Activated naive CD4-positive, alpha-beta T cell treated with anti-CD3 and anti-CD28 coated beads for 36 hours (primary cell): ENCODE measurements at regions of chr20 and their contacts with region 1.

Region 1: GRCh38 chr20:37095599-37096414 is at the start of gene RBL1:
- DNase-seq: peak; percentile 91
- H3K4me3 Mint-ChIP-seq: peak within 1 kb of the TSS; percentile 92
- H3K27ac Mint-ChIP-seq: peak within 1 kb of the TSS; percentile 100
- H3K4me1 Mint-ChIP-seq: peaks cover 37% of the 10 kb centered on the region
- H3K27me3 Mint-ChIP-seq: no peaks in the 10 kb centered on the region
- total RNA-seq, gene RBL1: 32.9 to 36.2 TPM

Region 2: DNA sequence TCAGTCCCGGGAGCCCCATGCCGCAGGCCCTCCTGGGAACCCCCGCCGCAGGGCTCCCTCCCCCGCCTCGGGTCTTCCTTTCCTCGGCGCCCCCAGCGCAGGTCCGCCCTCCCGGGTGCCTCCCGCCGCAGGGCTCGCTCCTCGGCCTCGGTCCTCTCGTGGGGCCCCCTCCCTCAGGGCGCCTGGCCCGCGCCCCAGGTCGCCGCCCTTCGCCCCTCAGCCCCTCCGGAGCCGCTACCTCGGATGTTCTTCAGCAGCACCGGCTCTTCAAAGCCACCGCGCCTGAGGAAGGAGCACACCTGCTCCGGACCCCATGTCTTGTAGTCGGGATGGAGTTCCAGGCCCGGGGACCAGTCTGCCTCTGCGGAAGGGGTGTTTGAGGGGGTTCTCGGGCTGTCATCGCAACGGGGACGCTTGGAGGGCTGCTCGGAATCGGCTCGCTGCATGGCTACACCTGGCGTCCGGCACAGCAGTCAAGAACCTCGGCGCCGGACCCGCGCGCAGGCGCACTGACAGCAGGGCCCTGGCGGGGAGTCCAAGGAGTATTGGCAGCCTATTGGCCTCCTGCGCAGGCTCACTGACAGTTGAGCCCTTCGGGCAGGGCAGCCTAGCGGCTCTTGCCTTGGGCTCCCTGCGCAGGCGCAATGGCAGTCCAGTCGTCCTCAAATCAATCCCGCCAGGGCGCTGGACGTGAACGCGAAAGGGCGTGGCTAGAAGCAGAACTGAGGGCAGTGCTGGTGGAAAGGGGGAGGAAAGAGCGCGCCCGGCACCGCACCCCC is 144.4 kb before region 1 on chr20 and contains the start of gene SAMHD1:
- CTCF ChIA-PET with region 1: no interaction called
- intact Hi-C with region 1: loop called (anchors 5 kb)
- DNase-seq: peak; percentile 89
- H3K4me3 Mint-ChIP-seq: peak within 1 kb of the TSS; percentile 96
- H3K27ac Mint-ChIP-seq: peak within 1 kb of the TSS; percentile 92
- H3K4me1 Mint-ChIP-seq: peaks cover 39% of the 10 kb centered on the region
- H3K27me3 Mint-ChIP-seq: no peaks in the 10 kb centered on the region
- total RNA-seq, gene SAMHD1: 29.9 to 33.5 TPM

Region 3: DNA sequence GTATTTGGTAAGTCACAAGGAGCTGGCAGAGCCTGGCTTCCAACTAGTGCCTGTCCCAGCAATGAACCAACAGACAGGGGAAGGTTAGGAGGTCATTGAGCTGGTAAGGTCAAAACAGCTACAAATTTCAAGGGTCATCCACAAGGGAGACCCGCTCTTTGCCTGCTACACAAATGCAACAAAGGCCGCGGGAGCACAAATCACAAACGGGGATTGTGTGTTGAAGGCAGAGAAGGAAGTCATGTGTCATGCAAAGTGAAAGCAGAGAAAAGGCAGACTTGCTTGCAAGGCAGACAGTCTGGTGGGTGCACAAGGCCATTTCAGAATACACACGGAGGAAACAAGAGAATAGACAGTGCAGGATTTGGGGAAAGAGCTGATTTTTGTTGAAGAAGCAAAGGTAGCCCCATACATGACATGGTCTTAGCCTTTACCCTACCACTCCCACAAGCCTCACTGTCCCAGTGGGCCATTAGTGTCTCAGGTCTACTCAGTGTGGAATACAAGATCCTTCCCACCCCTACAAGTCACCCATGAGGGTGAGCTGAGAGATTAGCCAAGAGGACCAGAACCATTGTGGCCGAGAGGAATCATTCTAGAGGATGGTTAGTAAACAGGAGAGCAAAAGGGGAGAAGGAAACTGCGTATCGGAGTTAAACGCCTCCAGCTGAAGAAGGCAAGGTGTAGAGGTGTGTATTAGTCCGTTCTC is 126.2 kb before region 1 on chr20:
- CTCF ChIA-PET with region 1: no interaction called
- intact Hi-C with region 1: loop called (anchors 5 kb)
- DNase-seq: peak; percentile 67
- H3K4me3 Mint-ChIP-seq: peak overlapping the region; percentile 53
- H3K27ac Mint-ChIP-seq: peak overlapping the region; percentile 86
- H3K4me1 Mint-ChIP-seq: peaks cover 60% of the 10 kb centered on the region
- H3K27me3 Mint-ChIP-seq: no peaks in the 10 kb centered on the region

Region 4: DNA sequence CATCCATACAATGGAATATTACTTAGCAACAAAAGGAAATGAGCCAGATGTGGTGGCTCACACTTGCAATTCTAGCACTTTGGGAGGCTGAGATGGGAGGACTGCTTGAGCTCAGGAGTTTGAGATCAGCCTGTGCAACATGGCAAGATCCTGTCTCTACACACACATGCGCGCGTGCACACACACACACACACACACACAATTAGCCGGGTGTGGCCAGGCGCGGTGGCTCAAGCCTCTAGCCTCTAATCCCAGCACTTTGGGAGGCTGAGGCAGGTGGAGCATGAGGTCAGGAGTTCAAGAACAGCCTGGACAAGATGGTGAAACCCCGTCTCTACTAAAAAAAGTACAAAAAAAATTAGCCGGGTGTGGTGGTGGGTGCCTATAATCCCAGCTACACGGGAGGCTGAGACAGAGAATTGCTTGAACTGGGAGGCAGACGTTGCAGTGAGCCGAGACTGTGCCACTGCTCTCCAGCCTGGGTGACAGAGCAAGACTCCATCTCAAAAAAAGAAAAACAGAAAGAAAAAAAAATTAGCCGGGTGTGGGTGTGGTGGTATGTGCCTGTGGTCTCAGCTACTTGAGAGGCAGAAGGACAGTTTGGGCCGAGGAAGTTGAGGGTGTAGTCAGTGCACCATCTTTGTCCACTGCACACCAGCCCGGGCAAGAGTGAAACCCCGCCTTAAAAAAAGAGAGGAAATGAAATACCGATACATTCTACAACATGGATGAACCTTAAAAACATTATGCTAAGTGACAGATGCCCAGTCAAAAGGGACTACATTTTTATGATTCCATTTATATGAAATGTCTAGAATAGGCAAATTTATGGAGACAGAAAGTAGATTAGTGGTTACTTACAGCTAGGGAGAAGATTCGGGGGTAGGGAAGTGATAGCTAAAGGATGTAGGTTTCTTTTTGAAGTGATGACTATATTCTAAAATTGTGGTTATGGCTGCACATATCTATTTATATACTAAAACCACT is 52.5 kb before region 1 on chr20:
- CTCF ChIA-PET with region 1: no interaction called
- intact Hi-C with region 1: loop called (anchors 10 kb)
- DNase-seq: peak; percentile 21
- H3K4me3 Mint-ChIP-seq: peak overlapping the region; percentile 19
- H3K27ac Mint-ChIP-seq: peak overlapping the region; percentile 60
- H3K4me1 Mint-ChIP-seq: peaks cover 25% of the 10 kb centered on the region
- H3K27me3 Mint-ChIP-seq: no peaks in the 10 kb centered on the region

Region 5: DNA sequence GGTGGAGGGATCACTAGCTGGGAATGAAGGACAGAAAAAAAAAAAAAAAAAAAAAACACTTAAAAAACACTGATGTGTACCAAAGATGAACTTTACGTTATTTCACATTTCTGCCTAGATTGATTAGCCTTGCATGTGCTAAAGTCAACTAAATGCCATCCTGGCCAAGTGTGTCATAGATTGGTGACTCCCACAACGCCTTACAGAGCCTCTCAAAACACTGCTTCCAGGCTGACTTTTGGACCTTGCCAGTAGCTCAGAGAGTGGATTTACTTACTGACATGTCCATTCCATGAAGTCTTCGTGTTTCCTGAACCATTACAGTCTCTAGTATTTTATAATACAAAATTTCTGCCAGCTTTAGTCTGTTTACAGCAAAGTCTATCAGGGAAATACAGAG is 40.5 kb before region 1 on chr20:
- CTCF ChIA-PET with region 1: no interaction called
- intact Hi-C with region 1: no loop called
- DNase-seq: no peak
- H3K4me3 Mint-ChIP-seq: no peak overlapping the region
- H3K27ac Mint-ChIP-seq: no peak overlapping the region
- H3K4me1 Mint-ChIP-seq: no peaks in the 10 kb centered on the region
- H3K27me3 Mint-ChIP-seq: no peaks in the 10 kb centered on the region

Region 6: GRCh38 chr20:37178839-37179670 is 83.2 kb after region 1 on chr20 and contains the starts of genes MROH8 and RPN2:
- CTCF ChIA-PET with region 1: interaction called, 4 read pairs
- intact Hi-C with region 1: loop called (anchors 1 kb)
- DNase-seq: peak; percentile 98
- H3K4me3 Mint-ChIP-seq: peak within 1 kb of the TSS; percentile 94
- H3K27ac Mint-ChIP-seq: peak within 1 kb of the TSS; percentile 97
- H3K4me1 Mint-ChIP-seq: peaks cover 37% of the 10 kb centered on the region
- H3K27me3 Mint-ChIP-seq: no peaks in the 10 kb centered on the region
- total RNA-seq, gene MROH8: 0.54 to 0.91 TPM
- total RNA-seq, gene RPN2: 102 to 104 TPM